RWPE1 (cell line): ENCODE measurements at regions of chr9 and their contacts with region 1.

Region 1: DNA sequence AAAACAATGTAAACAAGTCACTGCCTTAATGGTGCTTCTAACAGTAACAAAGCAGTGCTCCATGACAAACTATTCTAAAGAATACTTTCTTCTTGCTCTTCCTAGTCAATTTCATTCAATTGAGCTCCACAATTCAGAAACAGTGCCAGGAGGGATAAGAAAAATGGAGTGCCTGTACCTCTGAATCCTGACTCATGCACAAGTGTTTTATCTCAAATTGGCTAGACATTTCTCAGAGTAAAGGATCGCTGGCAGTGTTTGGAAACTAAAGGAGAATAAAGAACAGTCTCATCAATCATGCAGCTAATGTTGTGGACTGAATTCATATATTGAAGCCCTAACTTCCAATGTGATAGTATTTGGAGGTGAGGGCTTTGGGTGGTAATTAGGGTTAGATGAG is 27.6 kb downstream of the SLC25A51 start:
- DNase-seq: no peak
- H3K27ac ChIP-seq: no peak overlapping the region
- CTCF ChIP-seq: no peak

Region 2: DNA sequence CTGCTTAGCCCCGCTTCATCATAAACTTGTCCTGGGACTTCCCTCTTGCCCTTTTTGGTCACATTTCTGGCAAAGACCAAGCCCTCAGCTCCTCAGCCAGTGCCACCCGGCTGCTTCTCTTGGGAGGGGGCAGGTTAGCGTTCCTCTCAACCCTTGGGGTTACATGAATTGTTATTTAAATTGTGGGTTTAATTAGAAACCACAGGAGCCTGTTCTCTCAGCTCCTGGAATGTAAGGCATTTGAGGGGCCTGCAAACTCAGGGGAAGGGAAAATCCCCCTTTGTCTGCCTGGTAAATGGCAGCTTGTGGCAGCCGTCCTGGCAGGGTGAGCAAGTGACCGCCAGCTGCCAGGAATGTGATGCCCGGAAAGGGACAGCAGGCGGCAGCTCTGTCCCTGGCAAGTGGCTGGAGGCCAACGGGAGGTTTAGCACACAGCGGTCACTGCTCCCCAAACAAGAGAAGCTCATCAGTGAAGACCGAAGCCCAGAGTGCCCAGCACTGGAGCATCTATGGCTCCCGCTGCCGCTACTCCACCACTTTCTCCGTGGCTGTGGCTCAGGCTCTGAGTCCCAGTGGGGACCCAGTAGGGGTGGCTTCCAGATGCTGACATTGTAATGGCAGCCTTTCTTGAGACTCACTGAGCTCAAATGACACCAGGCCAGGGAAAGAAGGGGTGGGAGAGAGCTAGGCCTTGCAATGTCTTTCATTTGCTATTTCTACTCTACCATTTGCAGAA is 140.9 kb after region 1 on chr9:
- CTCF ChIA-PET with region 1: no interaction called
- POLR2A ChIA-PET with region 1: no interaction called
- DNase-seq: no peak
- H3K27ac ChIP-seq: peak overlapping the region; percentile 80
- CTCF ChIP-seq: no peak

Region 3: GRCh38 chr9:38329968-38330367 is 453.6 kb after region 1 on chr9:
- CTCF ChIA-PET with region 1: no interaction called
- POLR2A ChIA-PET with region 1: interaction called, 11 read pairs
- DNase-seq: no peak
- H3K27ac ChIP-seq: no peak overlapping the region
- CTCF ChIP-seq: no peak